Aorta (tissue), 5 donors: ENCODE measurements at regions of chr9 and their contacts with region 1.

Region 1: GRCh38 chr9:4375424-4376200 is 75.7 kb upstream of the GLIS3 start:
- DNase-seq: no peak
- ATAC-seq: no peak
- H3K4me3 ChIP-seq: no peak overlapping the region
- H3K27ac ChIP-seq: no peak overlapping the region
- H3K4me1 ChIP-seq: no peaks in the 10 kb centered on the region
- H3K27me3 ChIP-seq: no peaks in the 10 kb centered on the region

Region 2: DNA sequence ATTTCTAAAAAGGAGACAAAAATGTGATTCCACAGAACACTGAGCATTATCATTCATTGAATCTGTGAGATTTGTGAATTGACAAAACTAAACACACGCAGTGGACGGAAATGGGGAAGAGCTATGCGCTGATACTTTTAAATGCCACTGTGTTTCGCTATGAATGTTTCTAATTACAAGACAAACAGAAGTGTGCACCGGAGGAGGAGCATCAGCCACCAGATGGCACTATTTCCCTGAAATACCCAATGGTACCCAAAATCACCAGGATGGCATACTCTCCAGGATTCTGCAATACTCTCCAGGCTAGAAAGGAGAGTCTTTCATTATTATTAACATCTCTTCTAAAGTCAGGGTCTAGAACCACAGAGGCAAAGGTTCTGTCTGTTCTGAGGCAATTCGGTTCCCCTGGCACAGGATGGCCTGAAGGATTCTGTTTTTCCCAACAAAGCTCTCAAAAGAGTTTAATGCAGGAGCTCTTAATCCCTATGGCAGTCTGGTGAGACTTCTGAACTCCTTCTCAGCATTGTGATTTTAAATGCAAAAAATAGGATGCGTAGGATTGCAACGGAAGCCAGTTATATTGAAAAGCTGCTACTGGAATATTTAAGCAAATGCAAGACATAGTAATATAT is 1517.9 kb before region 1 on chr9:
- intact Hi-C with region 1: loop called in 1 of 2 experiments (anchors 10 kb)
- DNase-seq: peak in 1 of 2 donors; percentile 71
- ATAC-seq: peak; percentile 77
- H3K4me3 ChIP-seq: no peak overlapping the region
- H3K27ac ChIP-seq: no peak overlapping the region
- H3K4me1 ChIP-seq: no peaks in the 10 kb centered on the region
- H3K27me3 ChIP-seq: no peaks in the 10 kb centered on the region

Region 3: DNA sequence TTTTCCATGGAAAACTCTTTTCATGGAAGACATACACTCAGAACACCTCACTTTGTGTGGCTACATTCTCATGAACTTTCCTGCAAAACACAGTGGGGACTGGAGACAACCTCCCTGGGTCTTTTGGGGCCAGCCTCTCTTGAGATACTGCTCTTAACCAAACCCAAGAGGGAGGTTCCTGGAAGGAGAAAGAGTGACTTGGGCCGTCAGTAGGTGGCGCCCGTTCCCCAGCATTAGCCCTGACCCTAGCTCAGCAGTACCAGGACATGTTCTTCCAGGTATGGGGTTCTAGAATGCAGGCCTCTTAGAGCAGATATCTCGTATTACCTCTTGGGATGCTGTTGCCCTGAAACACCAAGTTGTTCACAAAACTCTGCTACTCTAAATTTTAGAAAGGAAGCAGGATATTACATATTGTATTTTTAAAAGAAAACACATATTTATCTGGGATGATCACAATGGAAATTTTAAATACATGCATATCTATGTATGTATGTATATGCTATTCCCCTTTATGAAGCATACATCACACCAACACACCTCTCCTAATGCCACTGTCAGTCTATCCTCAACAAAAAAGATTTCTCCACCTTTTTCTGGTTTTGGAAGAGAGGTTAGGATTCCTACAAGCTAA is 59.9 kb before region 1 on chr9:
- intact Hi-C with region 1: loop called (anchors 1 to 10 kb)
- DNase-seq: peak; percentile 78 to 94
- ATAC-seq: peak; percentile 90
- H3K4me3 ChIP-seq: no peak overlapping the region
- H3K27ac ChIP-seq: no peak overlapping the region
- H3K4me1 ChIP-seq: no peaks in the 10 kb centered on the region
- H3K27me3 ChIP-seq: no peaks in the 10 kb centered on the region

Region 4: DNA sequence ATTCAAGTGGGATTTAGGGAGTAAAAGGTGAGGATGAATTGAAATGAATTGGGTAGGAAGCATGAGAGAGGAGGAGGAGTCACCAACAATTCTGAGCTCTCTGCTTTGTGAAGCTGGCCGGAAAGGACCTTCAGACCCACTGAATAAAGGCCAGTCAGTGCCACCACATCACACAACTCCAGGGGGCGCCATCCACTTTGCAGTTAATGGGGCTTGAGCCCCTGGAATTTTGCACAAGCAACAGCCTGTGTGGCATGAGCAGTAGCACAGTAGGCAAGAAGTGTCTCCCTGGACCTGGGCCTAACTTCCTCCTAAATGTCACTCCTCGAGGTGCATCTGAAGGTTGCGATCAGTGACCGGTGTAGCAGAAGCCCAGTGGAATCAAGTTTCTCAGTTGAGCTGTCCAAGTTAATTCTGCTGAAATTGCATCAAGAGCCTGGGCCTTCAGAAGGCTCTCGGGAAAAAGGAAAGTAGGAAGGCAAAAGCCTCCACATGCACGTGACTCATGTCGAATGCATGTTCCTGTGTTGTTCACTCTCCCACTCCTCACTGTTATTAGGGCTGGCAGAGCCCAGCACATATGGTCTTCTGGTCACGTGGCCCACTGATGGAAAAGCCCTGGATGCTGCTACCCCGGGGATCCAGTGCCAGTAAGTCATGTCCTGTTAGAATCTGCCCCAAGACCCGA is 48.0 kb before region 1 on chr9:
- intact Hi-C with region 1: loop called in 1 of 2 experiments (anchors 10 kb)
- DNase-seq: no peak
- ATAC-seq: peak; percentile 26
- H3K4me3 ChIP-seq: no peak overlapping the region
- H3K27ac ChIP-seq: no peak overlapping the region
- H3K4me1 ChIP-seq: peaks cover 0 to 3% of the 10 kb centered on the region in 2 donors
- H3K27me3 ChIP-seq: no peaks in the 10 kb centered on the region

Region 5: GRCh38 chr9:4497855-4498254 is 122.2 kb after region 1 on chr9:
- intact Hi-C with region 1: no loop called
- DNase-seq: no peak
- ATAC-seq: no peak
- H3K4me3 ChIP-seq: no peak overlapping the region
- H3K27ac ChIP-seq: no peak overlapping the region
- H3K4me1 ChIP-seq: no peaks in the 10 kb centered on the region
- H3K27me3 ChIP-seq: no peaks in the 10 kb centered on the region

Region 6: GRCh38 chr9:4713849-4714248 is 338.2 kb after region 1 on chr9:
- intact Hi-C with region 1: no loop called
- DNase-seq: no peak
- ATAC-seq: peak; percentile 69
- H3K4me3 ChIP-seq: no peak overlapping the region
- H3K27ac ChIP-seq: no peak overlapping the region
- H3K4me1 ChIP-seq: no peaks in the 10 kb centered on the region
- H3K27me3 ChIP-seq: no peaks in the 10 kb centered on the region